ENCODE measurements at regions of chr2 and their contacts with region 1.

Region 1: DNA sequence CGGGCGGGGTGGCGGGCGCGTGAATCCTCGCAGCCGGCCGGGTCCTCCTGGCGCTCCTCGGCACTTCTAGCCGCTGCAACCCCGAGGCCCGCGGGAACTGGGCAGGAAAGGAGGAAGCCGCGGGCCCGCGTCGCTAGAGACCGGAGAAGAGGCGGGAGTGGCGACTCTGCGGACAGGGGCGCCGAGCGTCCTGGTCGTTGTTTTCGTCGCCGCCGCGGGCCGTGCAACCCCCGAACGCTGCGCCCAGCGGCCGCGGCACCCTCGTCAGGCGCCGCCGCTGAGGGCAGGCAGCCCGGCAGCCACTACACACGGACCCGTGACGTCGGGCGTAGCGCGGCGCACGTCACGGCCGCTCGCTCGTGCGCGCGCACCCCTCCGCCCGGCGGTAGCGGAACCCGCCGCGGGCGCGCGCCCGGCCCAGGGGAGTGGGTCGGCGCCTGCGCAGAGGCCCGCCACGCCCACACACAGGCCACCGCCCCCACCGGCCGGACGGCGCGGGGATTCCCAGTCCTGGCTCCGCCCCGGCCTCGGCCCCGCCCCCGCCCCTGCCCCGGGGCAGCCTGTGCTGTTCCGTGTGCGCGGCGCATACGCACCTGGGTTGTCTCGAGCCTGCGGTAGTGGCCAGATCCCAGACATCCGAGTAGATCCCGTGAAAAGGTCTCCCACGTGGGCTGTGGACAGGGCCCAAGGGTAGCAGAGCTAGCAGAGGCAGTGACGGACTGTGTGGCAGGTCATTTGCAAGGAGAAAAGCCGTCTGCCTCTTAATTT is at the start of gene MAP3K2:
- DNase-seq: peak; percentile 96
- ATAC-seq: peak; percentile 73
- H3K4me3 Mint-ChIP-seq: peak within 1 kb of the TSS; percentile 83
- H3K27ac Mint-ChIP-seq: peak within 1 kb of the TSS; percentile 93
- H3K4me1 Mint-ChIP-seq: peaks cover 72% of the 10 kb centered on the region
- H3K27me3 Mint-ChIP-seq: no peaks in the 10 kb centered on the region
- total RNA-seq, gene MAP3K2: 35.2 to 35.6 TPM

Region 2: DNA sequence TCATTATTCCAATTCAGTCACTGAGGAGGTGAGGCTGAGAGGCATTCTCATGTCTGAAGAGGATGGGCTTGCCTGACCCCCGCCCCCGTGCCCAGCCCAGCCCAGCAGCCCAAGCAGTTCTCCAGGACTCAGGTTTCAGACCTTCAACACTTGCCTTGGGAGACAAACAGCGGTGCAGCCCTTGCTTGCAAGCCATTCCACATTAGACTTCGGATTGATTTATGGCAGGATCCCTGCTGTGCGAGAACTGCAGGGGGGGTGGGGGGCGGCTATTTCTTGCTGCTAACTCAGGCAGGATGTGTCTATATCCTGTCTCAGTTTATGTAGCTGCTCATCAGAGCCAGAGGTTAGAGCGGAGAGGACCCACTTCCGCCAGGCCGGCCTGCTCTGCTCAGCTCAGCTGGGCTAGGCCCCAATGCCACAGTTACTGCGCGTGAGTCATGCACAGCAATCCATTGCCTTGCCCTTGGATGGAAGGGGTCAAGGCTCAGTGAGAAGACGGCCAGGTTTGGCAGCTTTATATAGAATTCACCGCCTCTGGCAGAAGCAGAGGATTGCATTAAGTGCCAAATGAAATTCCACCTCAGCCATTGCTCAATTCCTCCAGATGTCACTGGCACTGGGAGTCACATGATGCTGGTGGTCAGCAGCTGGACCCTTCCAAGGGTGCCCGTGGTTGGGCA is 730.1 kb before region 1 on chr2:
- CTCF ChIA-PET with region 1: no interaction called
- POLR2A ChIA-PET with region 1: no interaction called
- intact Hi-C with region 1: loop called in 1 of 2 experiments (anchors 10 kb)
- DNase-seq: peak; percentile 87
- ATAC-seq: peak; percentile 67
- H3K4me3 Mint-ChIP-seq: peak overlapping the region; percentile 97
- H3K27ac Mint-ChIP-seq: peak overlapping the region; percentile 99
- H3K4me1 Mint-ChIP-seq: peaks cover 59% of the 10 kb centered on the region
- H3K27me3 Mint-ChIP-seq: no peaks in the 10 kb centered on the region

Region 3: DNA sequence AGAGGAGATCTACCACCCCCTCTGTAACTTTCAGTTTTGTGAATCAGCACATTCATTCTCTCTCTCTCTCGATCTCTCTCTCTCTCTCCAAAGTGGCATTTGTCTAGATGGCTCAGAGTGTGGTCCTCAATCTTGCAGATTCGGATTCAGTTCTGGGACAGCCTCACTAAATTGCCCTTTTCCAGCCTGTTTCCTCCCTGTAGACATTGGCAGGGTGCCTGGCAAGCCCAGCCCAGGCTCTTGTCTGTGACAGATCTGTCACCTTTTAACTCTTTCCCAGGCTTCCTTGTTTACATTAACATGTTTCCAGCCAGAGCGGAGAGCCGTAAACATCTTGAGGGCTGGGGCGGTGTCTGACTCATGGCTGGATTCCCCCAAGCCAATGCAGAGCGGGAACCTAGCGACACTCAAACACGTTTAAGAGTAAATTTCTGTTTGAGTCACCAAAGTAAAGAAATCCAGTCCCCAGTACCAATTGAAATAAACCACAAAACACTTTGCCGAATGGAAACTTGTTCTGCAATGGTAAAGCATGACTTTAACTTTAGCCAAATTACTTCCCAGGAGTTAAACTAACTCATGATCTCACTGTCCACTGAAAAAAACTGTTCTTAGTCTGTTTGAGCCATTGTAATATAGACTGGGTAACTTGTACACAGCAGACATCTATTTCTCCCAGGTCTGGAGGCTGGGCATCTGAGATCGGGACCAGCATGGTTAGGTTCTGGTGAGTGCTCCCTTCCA is 161.1 kb before region 1 on chr2:
- CTCF ChIA-PET with region 1: no interaction called
- POLR2A ChIA-PET with region 1: no interaction called
- intact Hi-C with region 1: loop called in 1 of 2 experiments (anchors 2 kb)
- DNase-seq: peak; percentile 78
- ATAC-seq: peak; percentile 94
- H3K4me3 Mint-ChIP-seq: peak overlapping the region; percentile 30
- H3K27ac Mint-ChIP-seq: no peak overlapping the region
- H3K4me1 Mint-ChIP-seq: peaks cover 11% of the 10 kb centered on the region
- H3K27me3 Mint-ChIP-seq: peaks cover 31% of the 10 kb centered on the region

Region 4: GRCh38 chr2:127348426-127349000 is 39.3 kb before region 1 on chr2:
- CTCF ChIA-PET with region 1: no interaction called
- POLR2A ChIA-PET with region 1: no interaction called
- intact Hi-C with region 1: loop called in 1 of 2 experiments (anchors 5 kb)
- DNase-seq: no peak
- ATAC-seq: no peak
- H3K4me3 Mint-ChIP-seq: no peak overlapping the region
- H3K27ac Mint-ChIP-seq: no peak overlapping the region
- H3K4me1 Mint-ChIP-seq: peaks cover 59% of the 10 kb centered on the region
- H3K27me3 Mint-ChIP-seq: no peaks in the 10 kb centered on the region

Region 5: GRCh38 chr2:127408004-127408806 is 20.4 kb after region 1 on chr2:
- CTCF ChIA-PET with region 1: interaction called, 5 read pairs
- POLR2A ChIA-PET with region 1: no interaction called
- intact Hi-C with region 1: loop called (anchors 1 kb)
- DNase-seq: peak; percentile 94
- ATAC-seq: peak; percentile 87
- H3K4me3 Mint-ChIP-seq: no peak overlapping the region
- H3K27ac Mint-ChIP-seq: peak overlapping the region; percentile 67
- H3K4me1 Mint-ChIP-seq: peaks cover 32% of the 10 kb centered on the region
- H3K27me3 Mint-ChIP-seq: peaks cover 6% of the 10 kb centered on the region

Region 6: GRCh38 chr2:127810619-127811396 is 423.0 kb after region 1 on chr2 and contains the start of gene WDR33:
- CTCF ChIA-PET with region 1: no interaction called
- POLR2A ChIA-PET with region 1: no interaction called
- intact Hi-C with region 1: loop called in 1 of 2 experiments (anchors 5 kb)
- DNase-seq: peak; percentile 97
- ATAC-seq: peak; percentile 99
- H3K4me3 Mint-ChIP-seq: peak within 1 kb of the TSS; percentile 98
- H3K27ac Mint-ChIP-seq: peak within 1 kb of the TSS; percentile 99
- H3K4me1 Mint-ChIP-seq: peaks cover 42% of the 10 kb centered on the region
- H3K27me3 Mint-ChIP-seq: no peaks in the 10 kb centered on the region
- total RNA-seq, gene WDR33: 58.6 to 76.3 TPM